Calu3 (cell line): ENCODE measurements at regions of chr5 and their contacts with region 1.

Region 1: GRCh38 chr5:176537608-176538504 is 654 bp upstream of the RNF44 start:
- DNase-seq: peak; percentile 98
- H3K4me3 Mint-ChIP-seq: peak overlapping the region; percentile 96
- H3K27ac Mint-ChIP-seq: peak overlapping the region; percentile 97
- H3K4me1 Mint-ChIP-seq: peaks cover 81% of the 10 kb centered on the region
- H3K27me3 Mint-ChIP-seq: no peaks in the 10 kb centered on the region
- CTCF ChIP-seq: no peak

Region 2: DNA sequence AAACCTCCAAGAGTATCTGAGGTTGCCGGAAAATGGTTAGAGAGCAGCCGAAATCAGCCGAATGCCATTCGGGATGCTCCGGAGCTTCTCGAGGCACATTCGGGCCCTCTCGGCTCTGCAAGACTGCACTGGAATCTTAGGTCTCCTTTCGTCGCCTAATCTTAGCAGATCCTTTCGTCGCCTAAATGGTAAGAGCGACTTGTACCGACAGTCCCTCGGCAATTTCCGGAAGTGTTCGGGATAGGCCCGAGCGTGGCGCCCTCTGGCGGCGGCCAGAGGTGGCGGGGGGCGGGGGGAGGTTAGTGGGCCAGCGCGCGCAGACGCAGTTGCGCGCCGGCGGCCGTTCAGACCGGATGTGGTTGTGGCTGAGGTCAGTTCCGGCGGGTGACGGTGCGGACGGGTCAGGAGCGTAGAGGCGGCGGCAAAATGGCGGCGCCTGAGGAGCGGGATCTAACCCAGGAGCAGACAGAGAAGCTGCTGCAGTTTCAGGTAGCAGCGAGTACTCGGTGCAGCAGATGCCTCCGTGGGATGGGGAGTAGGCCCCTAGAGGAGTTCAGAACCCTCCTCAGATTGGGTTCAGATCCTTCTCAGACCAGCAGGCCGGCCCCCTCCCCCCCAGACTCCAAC is 89.8 kb before region 1 on chr5 and contains the start of gene FAF2:
- CTCF ChIA-PET with region 1: interaction called, 19 read pairs
- intact Hi-C with region 1: no loop called
- DNase-seq: peak; percentile 99
- H3K4me3 Mint-ChIP-seq: peak within 1 kb of the TSS; percentile 83
- H3K27ac Mint-ChIP-seq: peak within 1 kb of the TSS; percentile 89
- H3K4me1 Mint-ChIP-seq: peaks cover 26% of the 10 kb centered on the region
- H3K27me3 Mint-ChIP-seq: no peaks in the 10 kb centered on the region
- CTCF ChIP-seq: peak; percentile 98
- total RNA-seq, gene FAF2: 68.9 and 73.6 TPM in 2 replicates

Region 3: DNA sequence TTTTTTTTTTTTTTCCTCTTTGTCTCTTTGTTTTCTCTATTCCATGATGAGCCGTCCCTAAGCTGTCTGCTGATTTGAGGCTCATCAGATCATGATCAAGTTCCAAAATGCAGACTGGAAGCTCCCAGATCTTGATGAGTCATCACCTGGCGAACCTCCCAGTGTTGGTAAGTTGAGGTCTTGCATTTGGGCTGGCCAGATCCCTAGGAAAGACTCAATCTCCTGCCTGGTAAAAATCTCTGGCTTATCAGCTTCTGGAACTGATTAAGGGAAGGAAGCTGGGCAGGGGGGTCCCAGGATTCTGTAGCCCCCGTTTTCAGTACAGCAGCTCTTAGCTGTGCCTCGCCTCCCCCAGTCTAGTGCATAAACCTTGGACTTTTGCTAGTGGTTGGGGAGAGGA is 178.5 kb after region 1 on chr5:
- CTCF ChIA-PET with region 1: no interaction called
- intact Hi-C with region 1: no loop called
- DNase-seq: no peak
- H3K4me3 Mint-ChIP-seq: no peak overlapping the region
- H3K27ac Mint-ChIP-seq: no peak overlapping the region
- H3K4me1 Mint-ChIP-seq: no peaks in the 10 kb centered on the region
- H3K27me3 Mint-ChIP-seq: peaks cover 90% of the 10 kb centered on the region
- CTCF ChIP-seq: no peak